ENCODE measurements at regions of chr10 and their contacts with region 1.

Region 1: GRCh38 chr10:17643755-17644484 is at the start of gene STAM:
- DNase-seq: peak; percentile 92 to 94
- ATAC-seq: peak; percentile 91 to 97 (median 95)
- H3K4me3 ChIP-seq: peak within 1 kb of the TSS; percentile 47 to 97 (median 80)
- H3K27ac ChIP-seq: peak within 1 kb of the TSS; percentile 90 to 100 (median 96)
- H3K4me1 ChIP-seq: peaks cover 5 to 57% (median 47%) of the 10 kb centered on the region in 9 donors
- H3K27me3 ChIP-seq: no peaks in the 10 kb centered on the region
- CTCF ChIP-seq: no peak
- total RNA-seq, gene STAM: 22.8 to 43.5 (median 31.8) TPM

Region 2: DNA sequence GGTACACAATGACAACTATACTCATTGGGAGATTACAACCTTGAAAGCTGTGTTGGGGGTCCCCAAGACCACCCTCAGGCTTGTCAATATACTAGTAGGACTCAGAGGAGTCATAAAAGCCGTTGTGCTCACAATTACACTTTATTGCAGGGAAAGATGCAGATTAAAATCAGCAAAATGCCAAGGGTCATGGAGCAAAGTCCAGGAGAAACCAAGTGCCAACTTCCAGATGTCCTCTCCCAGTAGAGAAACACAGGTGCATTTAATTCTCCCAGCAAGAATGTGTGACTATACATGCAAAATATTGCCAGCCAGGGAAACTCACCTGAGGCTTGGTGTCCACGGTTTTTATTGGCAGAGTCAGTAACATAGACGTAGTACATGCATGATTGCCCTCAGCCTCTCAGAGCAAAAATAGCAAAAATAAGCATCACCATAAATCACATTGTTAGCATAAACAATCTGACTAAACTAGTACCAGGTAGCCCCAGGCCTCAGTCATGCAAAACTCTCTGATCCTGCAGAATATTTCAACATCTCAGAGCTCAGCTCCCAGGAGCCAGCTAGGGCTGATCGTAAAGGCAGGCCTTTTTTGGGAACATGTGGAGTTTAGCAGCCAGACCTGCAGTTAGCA is 365.2 kb before region 1 on chr10:
- intact Hi-C with region 1: no loop called
- DNase-seq: no peak
- ATAC-seq: no peak
- H3K4me3 ChIP-seq: no peak overlapping the region
- H3K27ac ChIP-seq: no peak overlapping the region
- H3K4me1 ChIP-seq: no peaks in the 10 kb centered on the region
- H3K27me3 ChIP-seq: no peaks in the 10 kb centered on the region
- CTCF ChIP-seq: no peak

Region 3: GRCh38 chr10:17665747-17666146 is 21.8 kb after region 1 on chr10:
- intact Hi-C with region 1: loop called in 1 of 10 experiments (anchors 2 kb)
- DNase-seq: peak in 1 of 2 donors; percentile 27
- ATAC-seq: peak in 7 of 8 donors; percentile 56 to 82 (median 72)
- H3K4me3 ChIP-seq: peak overlapping the region in 1 of 10 donors; percentile 14
- H3K27ac ChIP-seq: peak overlapping the region in 8 of 10 donors; percentile 27 to 78 (median 64)
- H3K4me1 ChIP-seq: peaks cover 0 to 61% (median 39%) of the 10 kb centered on the region in 9 donors
- H3K27me3 ChIP-seq: no peaks in the 10 kb centered on the region
- CTCF ChIP-seq: no peak

Measured in heart right ventricle (tissue), 16 donors.